Activated CD8-positive, alpha-beta T cell treated with anti-CD3 and anti-CD28 coated beads for 36 hours (primary cell): ENCODE measurements at regions of chr17 and their contacts with region 1.

Region 1: GRCh38 chr17:19992803-19993713 is 15.4 kb upstream of the AKAP10 start:
- DNase-seq: peak; percentile 88
- ATAC-seq: peak; percentile 99
- H3K4me3 Mint-ChIP-seq: no peak overlapping the region
- H3K27ac Mint-ChIP-seq: no peak overlapping the region
- H3K4me1 Mint-ChIP-seq: no peaks in the 10 kb centered on the region
- H3K27me3 Mint-ChIP-seq: peaks cover 3% of the 10 kb centered on the region
- CTCF ChIP-seq: peak; percentile 63

Region 2: DNA sequence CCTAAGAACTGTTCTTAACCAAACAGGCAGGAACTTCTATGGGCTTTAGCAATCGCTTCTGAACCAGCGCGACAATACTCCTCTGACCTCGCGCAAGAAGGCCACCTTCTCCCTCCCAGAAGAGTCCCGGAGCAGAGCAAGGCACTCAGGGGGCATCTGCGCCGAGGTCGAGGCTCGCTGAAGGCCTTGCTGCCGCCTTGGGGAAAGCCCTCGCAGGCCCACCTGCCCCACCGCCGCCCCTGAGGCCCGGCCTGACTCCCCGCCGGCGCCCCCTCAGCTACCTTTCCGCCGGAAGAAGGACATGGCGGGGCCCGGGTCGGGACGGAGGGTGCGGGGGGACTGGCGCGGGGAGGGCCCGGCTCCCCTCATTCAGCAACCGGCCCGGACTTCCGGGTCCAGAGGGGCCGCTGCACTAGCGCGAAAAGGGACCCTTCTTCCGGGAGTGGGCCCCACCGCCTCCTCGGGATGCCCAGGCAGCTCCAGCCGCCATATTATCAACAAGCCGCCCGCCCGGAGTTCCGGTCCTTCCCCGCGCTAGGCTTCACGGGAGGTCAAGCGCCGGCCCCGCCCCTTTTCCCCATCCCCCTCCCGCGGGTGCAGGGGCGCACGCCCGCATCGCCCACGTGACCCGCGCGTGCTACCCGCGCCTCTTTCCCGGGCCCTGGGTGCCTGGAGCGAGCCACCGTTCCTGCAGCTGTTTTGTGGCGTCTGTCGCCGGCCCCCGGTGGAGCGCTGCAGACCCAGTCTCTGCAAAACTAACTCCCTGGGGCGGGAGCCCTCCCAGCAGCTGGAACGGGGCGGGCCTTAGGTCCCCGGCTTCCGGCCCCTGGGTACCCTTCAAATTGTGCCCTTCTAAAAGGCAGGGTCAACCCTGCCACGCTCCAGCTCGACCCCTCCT is 15.5 kb before region 1 on chr17 and contains the start of gene AKAP10:
- CTCF ChIA-PET with region 1: interaction called, 12 read pairs
- POLR2A ChIA-PET with region 1: no interaction called
- intact Hi-C with region 1: no loop called
- DNase-seq: peak; percentile 97
- ATAC-seq: peak; percentile 88
- H3K4me3 Mint-ChIP-seq: peak within 1 kb of the TSS; percentile 91
- H3K27ac Mint-ChIP-seq: peak within 1 kb of the TSS; percentile 98
- H3K4me1 Mint-ChIP-seq: peaks cover 47% of the 10 kb centered on the region
- H3K27me3 Mint-ChIP-seq: no peaks in the 10 kb centered on the region
- CTCF ChIP-seq: no peak
- total RNA-seq, gene AKAP10: 38.6 to 39.2 TPM

Region 3: DNA sequence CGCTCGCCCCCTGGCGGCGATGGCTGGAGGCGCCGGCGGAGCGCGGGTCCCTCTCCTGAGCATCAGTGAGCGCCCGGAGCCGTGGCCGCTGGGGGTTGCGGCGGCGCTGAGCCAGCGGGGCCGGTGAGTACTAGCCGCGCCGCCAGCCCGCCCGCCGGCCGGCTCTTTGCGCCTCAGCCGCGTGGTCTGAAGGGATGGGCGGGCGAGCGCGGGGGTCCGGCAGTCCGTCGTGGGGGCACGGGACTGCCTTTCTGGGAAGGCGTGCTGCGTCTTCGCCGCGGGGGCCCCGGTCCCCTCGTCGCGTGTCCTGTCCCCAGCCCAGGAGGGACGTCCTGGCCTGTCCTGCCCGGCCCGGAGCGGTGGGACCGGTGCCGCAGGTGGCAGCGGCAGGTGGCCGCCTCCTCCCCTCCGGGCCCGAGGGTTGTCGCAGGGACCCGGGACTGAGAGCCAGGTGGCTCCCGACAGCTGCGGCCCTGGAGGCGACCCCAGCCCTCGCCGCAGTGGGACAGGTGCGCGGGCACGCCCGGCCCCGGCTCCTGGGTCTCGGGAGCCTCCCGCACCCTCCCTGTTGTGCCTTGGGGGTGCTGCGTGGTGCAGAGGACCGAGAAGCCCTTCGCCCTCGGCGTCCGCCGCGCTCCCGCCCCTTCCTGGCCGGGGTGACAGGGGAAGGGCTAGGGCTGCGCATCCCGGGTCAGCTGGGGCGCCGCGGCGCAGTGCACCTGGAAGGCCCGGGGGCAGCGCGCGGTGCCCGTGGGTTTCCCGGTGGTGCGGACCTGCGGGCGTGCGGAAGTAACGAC is 16.4 kb after region 1 on chr17 and contains the start of gene SPECC1:
- CTCF ChIA-PET with region 1: interaction called, 49 read pairs
- POLR2A ChIA-PET with region 1: no interaction called
- intact Hi-C with region 1: no loop called
- DNase-seq: peak; percentile 86
- ATAC-seq: peak; percentile 97
- H3K4me3 Mint-ChIP-seq: peak within 1 kb of the TSS; percentile 82
- H3K27ac Mint-ChIP-seq: no peak within 1 kb of the TSS
- H3K4me1 Mint-ChIP-seq: peaks cover 7% of the 10 kb centered on the region
- H3K27me3 Mint-ChIP-seq: peaks cover 51% of the 10 kb centered on the region
- CTCF ChIP-seq: peak; percentile 97
- total RNA-seq, gene SPECC1: 9.9 to 10.3 TPM

Region 4: GRCh38 chr17:20111538-20111937 is 118.5 kb after region 1 on chr17:
- CTCF ChIA-PET with region 1: interaction called, 48 read pairs
- POLR2A ChIA-PET with region 1: no interaction called
- intact Hi-C with region 1: loop called (anchors 5 kb)
- DNase-seq: no peak
- ATAC-seq: no peak
- H3K4me3 Mint-ChIP-seq: no peak overlapping the region
- H3K27ac Mint-ChIP-seq: no peak overlapping the region
- H3K4me1 Mint-ChIP-seq: peaks cover 2% of the 10 kb centered on the region
- H3K27me3 Mint-ChIP-seq: peaks cover 3% of the 10 kb centered on the region
- CTCF ChIP-seq: no peak